ENCODE measurements at regions of chr6 and their contacts with region 1.

Region 1: GRCh38 chr6:138001750-138002349 is 105.4 kb downstream of the PERP start:
- DNase-seq: peak; percentile 65
- ATAC-seq: peak; percentile 63
- H3K4me3 ChIP-seq: no peak overlapping the region
- H3K4me3 Mint-ChIP-seq: no peak overlapping the region
- H3K27ac ChIP-seq: no peak overlapping the region
- H3K27ac Mint-ChIP-seq: no peak overlapping the region
- H3K4me1 ChIP-seq: no peaks in the 10 kb centered on the region
- H3K4me1 Mint-ChIP-seq: peaks cover 3% of the 10 kb centered on the region
- H3K27me3 ChIP-seq: no peaks in the 10 kb centered on the region
- H3K27me3 Mint-ChIP-seq: peaks cover 11% of the 10 kb centered on the region
- CTCF ChIP-seq: peak; percentile 96

Region 2: GRCh38 chr6:137661601-137662000 is 340.2 kb before region 1 on chr6:
- CTCF ChIA-PET with region 1: interaction called, 89 read pairs
- POLR2A ChIA-PET with region 1: no interaction called
- intact Hi-C with region 1: loop called (anchors 1 kb)
- DNase-seq: peak; percentile 65
- ATAC-seq: peak; percentile 49
- H3K4me3 ChIP-seq: no peak overlapping the region
- H3K4me3 Mint-ChIP-seq: no peak overlapping the region
- H3K27ac ChIP-seq: no peak overlapping the region
- H3K27ac Mint-ChIP-seq: no peak overlapping the region
- H3K4me1 ChIP-seq: no peaks in the 10 kb centered on the region
- H3K4me1 Mint-ChIP-seq: no peaks in the 10 kb centered on the region
- H3K27me3 ChIP-seq: no peaks in the 10 kb centered on the region
- H3K27me3 Mint-ChIP-seq: peaks cover 7% of the 10 kb centered on the region
- CTCF ChIP-seq: peak; percentile 58

Region 3: GRCh38 chr6:137951064-137951597 is 50.7 kb before region 1 on chr6:
- CTCF ChIA-PET with region 1: interaction called, 36 read pairs
- POLR2A ChIA-PET with region 1: no interaction called
- intact Hi-C with region 1: loop called (anchors 2 kb)
- DNase-seq: peak; percentile 68
- ATAC-seq: peak; percentile 72
- H3K4me3 ChIP-seq: no peak overlapping the region
- H3K4me3 Mint-ChIP-seq: no peak overlapping the region
- H3K27ac ChIP-seq: no peak overlapping the region
- H3K27ac Mint-ChIP-seq: peak overlapping the region; percentile 15
- H3K4me1 ChIP-seq: peaks cover 20 to 22% of the 10 kb centered on the region in 2 donors
- H3K4me1 Mint-ChIP-seq: peaks cover 21% of the 10 kb centered on the region
- H3K27me3 ChIP-seq: no peaks in the 10 kb centered on the region
- H3K27me3 Mint-ChIP-seq: no peaks in the 10 kb centered on the region
- CTCF ChIP-seq: no peak

Region 4: DNA sequence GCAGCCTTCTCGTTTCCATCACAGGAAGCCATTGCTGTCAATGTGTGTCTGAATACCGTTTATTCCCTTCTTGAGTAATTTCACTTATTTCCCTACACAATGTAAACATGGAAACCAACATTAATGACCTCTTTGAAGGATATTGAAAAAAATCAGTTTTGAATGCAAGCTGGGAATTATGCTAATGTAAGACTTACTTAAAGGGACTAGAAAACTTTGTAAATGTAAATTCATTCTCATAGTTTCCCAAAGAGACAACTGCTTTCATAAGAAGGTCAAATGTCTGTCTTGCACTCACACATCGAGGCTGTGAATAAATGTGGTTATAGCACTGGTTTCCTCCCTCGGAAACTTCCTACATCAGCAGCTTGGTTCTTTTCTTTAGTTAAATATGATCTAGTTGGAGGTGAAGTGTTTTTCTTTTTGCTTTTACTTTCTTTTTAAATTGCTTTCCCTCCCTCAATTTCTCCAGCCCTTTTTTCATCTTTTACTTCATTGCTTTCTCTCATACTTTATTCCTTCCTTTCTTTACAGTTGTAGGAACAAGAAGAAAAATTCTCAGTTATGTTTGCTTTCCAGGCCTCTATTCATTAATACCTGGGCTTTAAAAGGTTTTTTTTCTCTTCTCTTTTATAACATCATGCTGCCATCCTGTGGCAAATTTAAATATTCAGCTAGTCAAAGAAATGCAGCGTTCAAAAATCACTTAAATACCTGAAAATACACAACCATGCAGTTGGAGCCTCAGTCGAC is 26.5 kb before region 1 on chr6:
- CTCF ChIA-PET with region 1: interaction called, 10 read pairs
- POLR2A ChIA-PET with region 1: no interaction called
- intact Hi-C with region 1: no loop called
- DNase-seq: peak; percentile 57
- ATAC-seq: no peak
- H3K4me3 ChIP-seq: no peak overlapping the region
- H3K4me3 Mint-ChIP-seq: peak overlapping the region; percentile 3
- H3K27ac ChIP-seq: peak overlapping the region in 1 of 2 donors; percentile 68
- H3K27ac Mint-ChIP-seq: peak overlapping the region; percentile 12
- H3K4me1 ChIP-seq: peaks cover 8 to 17% of the 10 kb centered on the region in 2 donors
- H3K4me1 Mint-ChIP-seq: peaks cover 8% of the 10 kb centered on the region
- H3K27me3 ChIP-seq: no peaks in the 10 kb centered on the region
- H3K27me3 Mint-ChIP-seq: no peaks in the 10 kb centered on the region
- CTCF ChIP-seq: peak; percentile 56

Region 5: GRCh38 chr6:138021176-138021575 is 19.3 kb after region 1 on chr6:
- CTCF ChIA-PET with region 1: no interaction called
- POLR2A ChIA-PET with region 1: no interaction called
- intact Hi-C with region 1: no loop called
- DNase-seq: no peak
- ATAC-seq: no peak
- H3K4me3 ChIP-seq: no peak overlapping the region
- H3K4me3 Mint-ChIP-seq: no peak overlapping the region
- H3K27ac ChIP-seq: no peak overlapping the region
- H3K27ac Mint-ChIP-seq: no peak overlapping the region
- H3K4me1 ChIP-seq: no peaks in the 10 kb centered on the region
- H3K4me1 Mint-ChIP-seq: no peaks in the 10 kb centered on the region
- H3K27me3 ChIP-seq: peaks cover 0 to 6% (median 2%) of the 10 kb centered on the region in 4 experiments
- H3K27me3 Mint-ChIP-seq: peaks cover 23% of the 10 kb centered on the region
- CTCF ChIP-seq: no peak

Region 6: DNA sequence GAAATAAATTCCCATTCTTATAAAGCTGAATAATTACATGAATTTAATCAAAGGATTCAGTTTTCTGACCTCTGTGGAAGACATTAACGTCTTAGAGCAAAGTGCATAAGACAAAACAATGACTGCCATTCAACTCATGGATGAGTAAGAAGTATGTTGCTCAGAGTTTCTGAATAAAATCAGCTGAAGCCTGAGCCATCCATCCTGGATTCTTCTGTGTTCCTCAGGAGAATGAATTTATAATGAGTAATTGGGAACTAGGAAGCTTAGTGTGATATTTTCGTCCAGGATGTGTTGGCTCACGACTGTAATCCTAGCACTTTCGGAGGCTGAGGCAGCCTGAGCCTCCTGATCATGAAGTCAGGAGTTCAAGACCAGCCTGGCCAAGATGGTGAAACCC is 42.6 kb after region 1 on chr6:
- CTCF ChIA-PET with region 1: no interaction called
- POLR2A ChIA-PET with region 1: no interaction called
- intact Hi-C with region 1: no loop called
- DNase-seq: no peak
- ATAC-seq: no peak
- H3K4me3 ChIP-seq: no peak overlapping the region
- H3K4me3 Mint-ChIP-seq: no peak overlapping the region
- H3K27ac ChIP-seq: no peak overlapping the region
- H3K27ac Mint-ChIP-seq: no peak overlapping the region
- H3K4me1 ChIP-seq: no peaks in the 10 kb centered on the region
- H3K4me1 Mint-ChIP-seq: no peaks in the 10 kb centered on the region
- H3K27me3 ChIP-seq: no peaks in the 10 kb centered on the region
- H3K27me3 Mint-ChIP-seq: peaks cover 17% of the 10 kb centered on the region
- CTCF ChIP-seq: no peak

Region 7: DNA sequence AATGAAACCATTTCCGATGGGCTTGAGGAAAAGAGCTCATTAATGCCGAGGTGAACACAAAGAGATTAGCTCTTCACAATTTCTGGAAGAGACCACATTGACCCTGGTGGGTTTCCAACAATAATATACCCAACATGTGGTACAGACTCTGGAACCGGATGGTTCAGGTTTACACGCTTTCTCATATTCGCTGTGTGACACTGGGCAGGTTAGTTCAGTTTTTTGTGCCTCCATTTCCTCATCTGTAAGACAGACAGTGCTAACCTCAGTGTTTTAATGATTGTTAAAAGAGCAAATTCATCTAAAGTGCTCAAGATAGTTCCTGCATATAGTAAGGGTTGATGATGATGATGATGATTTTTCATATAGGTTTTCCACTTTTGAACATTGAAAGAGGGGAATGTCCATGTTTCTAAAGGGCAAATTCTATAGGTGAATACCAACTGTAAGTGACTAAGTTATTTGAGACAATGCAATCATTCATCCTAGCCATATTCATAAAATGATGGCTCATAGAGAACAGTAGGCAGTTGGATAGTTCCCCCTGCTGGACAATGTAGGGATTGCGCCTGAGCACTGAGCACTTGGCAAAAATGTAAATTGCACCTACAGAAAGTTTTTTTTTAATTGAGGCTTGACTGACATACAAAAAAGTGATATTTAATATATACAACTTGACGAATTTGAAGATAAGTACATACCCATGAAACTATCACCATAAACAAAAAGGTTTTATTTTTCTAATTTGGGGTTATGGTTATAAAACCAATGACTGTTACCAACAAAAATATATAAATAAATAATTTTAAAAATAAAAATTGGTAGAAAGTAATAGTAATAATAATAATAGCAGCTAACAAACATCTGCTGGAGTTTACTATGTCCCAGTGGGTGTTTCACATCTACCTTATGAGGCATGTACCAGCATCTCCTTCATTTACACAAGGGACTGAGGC is 107.5 kb after region 1 on chr6:
- CTCF ChIA-PET with region 1: interaction called, 28 read pairs
- POLR2A ChIA-PET with region 1: no interaction called
- intact Hi-C with region 1: loop called (anchors 1 kb)
- DNase-seq: peak; percentile 81
- ATAC-seq: peak; percentile 66
- H3K4me3 ChIP-seq: no peak overlapping the region
- H3K4me3 Mint-ChIP-seq: peak overlapping the region; percentile 11
- H3K27ac ChIP-seq: no peak overlapping the region
- H3K27ac Mint-ChIP-seq: no peak overlapping the region
- H3K4me1 ChIP-seq: peaks cover 14 to 19% of the 10 kb centered on the region in 2 donors
- H3K4me1 Mint-ChIP-seq: peaks cover 18% of the 10 kb centered on the region
- H3K27me3 ChIP-seq: peaks cover 0 to 42% (median 33%) of the 10 kb centered on the region in 4 experiments
- H3K27me3 Mint-ChIP-seq: peaks cover 48% of the 10 kb centered on the region
- CTCF ChIP-seq: peak; percentile 99

Region 8: DNA sequence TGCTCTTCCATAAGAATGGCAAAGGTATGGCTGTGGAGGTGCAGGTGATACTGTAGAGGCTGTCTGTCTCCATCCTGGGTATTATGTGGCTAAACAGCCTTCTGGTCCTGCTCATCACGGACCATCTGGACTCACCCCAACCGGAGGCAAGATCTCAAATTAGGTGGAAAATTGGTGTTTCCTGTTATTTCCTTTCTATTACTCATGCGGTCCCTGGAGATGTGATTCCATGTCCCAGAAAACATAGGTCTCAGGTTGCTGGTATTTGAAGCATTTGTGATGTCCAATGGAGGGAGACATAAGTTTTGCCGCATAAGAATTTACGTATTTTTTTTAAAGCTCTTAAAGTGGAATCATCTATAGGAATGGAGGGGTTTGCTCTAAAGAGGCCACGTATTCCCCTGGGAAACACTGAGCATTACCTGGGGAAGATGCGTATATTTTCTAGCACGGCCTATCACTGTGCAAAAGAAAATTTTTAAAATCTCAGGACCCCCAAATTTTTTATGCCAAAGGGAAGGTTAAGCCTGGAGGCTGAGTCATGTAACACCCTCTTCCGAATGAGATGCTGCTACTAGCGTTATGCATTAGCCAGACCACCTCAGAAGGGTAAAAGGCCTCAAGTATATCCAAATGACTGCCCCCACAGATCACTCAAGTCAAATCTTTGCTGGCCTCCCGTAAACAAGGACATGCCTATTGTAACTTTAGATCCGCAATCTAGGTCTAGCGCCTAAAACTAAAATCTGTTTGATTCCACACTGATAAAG is 238.8 kb after region 1 on chr6:
- CTCF ChIA-PET with region 1: no interaction called
- POLR2A ChIA-PET with region 1: no interaction called
- intact Hi-C with region 1: no loop called
- DNase-seq: no peak
- ATAC-seq: no peak
- H3K4me3 ChIP-seq: no peak overlapping the region
- H3K4me3 Mint-ChIP-seq: no peak overlapping the region
- H3K27ac ChIP-seq: no peak overlapping the region
- H3K27ac Mint-ChIP-seq: no peak overlapping the region
- H3K4me1 ChIP-seq: no peaks in the 10 kb centered on the region
- H3K4me1 Mint-ChIP-seq: no peaks in the 10 kb centered on the region
- H3K27me3 ChIP-seq: peaks cover 0 to 7% (median 0%) of the 10 kb centered on the region in 4 experiments
- H3K27me3 Mint-ChIP-seq: peaks cover 32% of the 10 kb centered on the region
- CTCF ChIP-seq: no peak

Measured in B cell (primary cell).